Cardiac septum (tissue), 1 donor: ENCODE measurements at regions of chr3 and their contacts with region 1.

Region 1: GRCh38 chr3:16247276-16248061 is 17.3 kb downstream of the DPH3 start:
- DNase-seq: no peak

Region 2: GRCh38 chr3:15629860-15630597 is 617.4 kb before region 1 on chr3:
- intact Hi-C with region 1: loop called (anchors 10 kb)
- DNase-seq: no peak

Region 3: DNA sequence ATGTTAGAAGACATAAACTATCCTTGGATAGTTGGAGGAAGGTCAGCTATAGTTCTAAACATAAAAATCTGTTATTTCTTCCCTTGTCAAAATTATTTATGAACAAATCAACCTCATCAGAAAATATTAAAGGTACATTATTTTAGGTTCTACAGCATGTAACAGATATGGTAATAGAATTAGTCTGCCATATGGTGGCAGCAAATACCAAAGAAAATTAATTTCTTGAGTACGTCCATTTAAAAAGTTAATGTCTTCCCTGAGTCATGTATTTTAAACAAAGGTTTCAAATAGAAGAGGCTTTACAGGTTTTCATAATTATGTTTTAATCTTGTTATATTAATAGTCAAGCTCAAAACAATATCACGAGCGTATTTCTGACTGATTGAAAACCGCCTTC is 431.8 kb before region 1 on chr3:
- intact Hi-C with region 1: loop called (anchors 2 kb)
- DNase-seq: no peak

Region 4: GRCh38 chr3:15982667-15983145 is 264.8 kb before region 1 on chr3:
- intact Hi-C with region 1: loop called (anchors 5 kb)
- DNase-seq: no peak

Region 5: GRCh38 chr3:16048435-16049318 is 198.8 kb before region 1 on chr3:
- intact Hi-C with region 1: loop called (anchors 1 kb)
- DNase-seq: no peak

Region 6: DNA sequence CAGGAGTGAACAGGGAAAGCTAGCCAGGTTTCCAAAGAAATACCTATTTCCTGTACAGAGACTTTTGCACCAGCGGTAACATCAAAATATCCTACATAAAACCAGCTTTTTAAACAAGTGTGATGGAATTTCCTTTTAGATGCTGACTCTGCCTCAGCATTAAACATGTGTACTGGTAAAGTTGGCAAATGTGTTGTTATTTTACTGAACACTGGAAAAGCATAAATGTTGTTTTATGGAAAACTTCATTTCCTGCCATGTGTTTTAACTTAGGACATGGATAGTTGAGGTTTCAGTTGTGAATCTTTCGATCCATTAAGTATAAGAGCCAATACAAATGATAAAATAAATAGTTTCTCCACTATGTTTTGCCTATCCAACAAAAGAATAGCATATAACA is 33.2 kb after region 1 on chr3:
- intact Hi-C with region 1: no loop called
- DNase-seq: no peak